Sigmoid colon (tissue), 7 donors: ENCODE measurements at regions of chr11 and their contacts with region 1.

Region 1: GRCh38 chr11:74739546-74740270 is 8.5 kb upstream of the CHRDL2 start:
- DNase-seq: no peak
- H3K4me3 ChIP-seq: no peak overlapping the region
- H3K27ac ChIP-seq: no peak overlapping the region
- H3K4me1 ChIP-seq: no peaks in the 10 kb centered on the region
- H3K27me3 ChIP-seq: no peaks in the 10 kb centered on the region
- CTCF ChIP-seq: peak; percentile 66 to 92 (median 83)
- EP300 ChIP-seq: no peak
- POLR2A ChIP-seq: no peak

Region 2: GRCh38 chr11:74255741-74256369 is 483.9 kb before region 1 on chr11:
- intact Hi-C with region 1: loop called (anchors 10 kb)
- DNase-seq: no peak
- H3K4me3 ChIP-seq: no peak overlapping the region
- H3K27ac ChIP-seq: no peak overlapping the region
- H3K4me1 ChIP-seq: peaks cover 0 to 19% (median 18%) of the 10 kb centered on the region in 4 donors
- H3K27me3 ChIP-seq: no peaks in the 10 kb centered on the region
- CTCF ChIP-seq: peak; percentile 62 to 90 (median 86)
- EP300 ChIP-seq: no peak
- POLR2A ChIP-seq: no peak

Region 3: DNA sequence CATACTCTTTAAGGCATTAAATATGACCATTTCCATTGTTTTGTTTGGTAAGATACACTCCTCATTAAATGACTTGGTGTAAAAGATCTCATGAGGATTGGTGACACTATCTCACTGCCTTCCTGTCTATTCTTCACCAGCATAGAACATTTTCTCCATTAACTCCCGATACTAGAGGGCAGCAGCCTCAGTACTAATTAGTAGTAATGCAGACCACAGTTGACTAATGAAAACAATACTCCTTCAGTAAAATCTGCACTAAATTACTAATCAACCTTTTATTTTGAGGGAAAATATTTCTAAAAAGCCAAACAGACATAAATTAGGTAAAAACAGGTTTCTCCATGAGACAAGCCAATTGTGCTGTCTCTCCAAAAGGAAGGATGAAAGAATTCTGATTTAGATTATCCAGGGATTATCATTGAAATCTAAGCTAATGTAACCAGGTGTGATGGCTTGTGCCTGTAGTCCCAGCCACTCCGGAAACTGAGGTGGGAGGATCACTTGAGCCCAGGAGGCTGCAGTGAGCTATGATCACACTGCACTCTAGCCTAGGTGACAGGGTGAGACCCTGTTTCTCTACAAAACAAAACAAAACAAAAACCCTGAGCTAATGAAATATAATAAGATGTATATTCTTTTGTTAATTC is 350.9 kb before region 1 on chr11:
- intact Hi-C with region 1: loop called (anchors 5 kb)
- DNase-seq: peak; percentile 72
- H3K4me3 ChIP-seq: no peak overlapping the region
- H3K27ac ChIP-seq: no peak overlapping the region
- H3K4me1 ChIP-seq: peaks cover 0 to 6% (median 0%) of the 10 kb centered on the region in 4 donors
- H3K27me3 ChIP-seq: no peaks in the 10 kb centered on the region
- CTCF ChIP-seq: peak; percentile 43 to 76 (median 66)
- EP300 ChIP-seq: no peak
- POLR2A ChIP-seq: no peak

Region 4: DNA sequence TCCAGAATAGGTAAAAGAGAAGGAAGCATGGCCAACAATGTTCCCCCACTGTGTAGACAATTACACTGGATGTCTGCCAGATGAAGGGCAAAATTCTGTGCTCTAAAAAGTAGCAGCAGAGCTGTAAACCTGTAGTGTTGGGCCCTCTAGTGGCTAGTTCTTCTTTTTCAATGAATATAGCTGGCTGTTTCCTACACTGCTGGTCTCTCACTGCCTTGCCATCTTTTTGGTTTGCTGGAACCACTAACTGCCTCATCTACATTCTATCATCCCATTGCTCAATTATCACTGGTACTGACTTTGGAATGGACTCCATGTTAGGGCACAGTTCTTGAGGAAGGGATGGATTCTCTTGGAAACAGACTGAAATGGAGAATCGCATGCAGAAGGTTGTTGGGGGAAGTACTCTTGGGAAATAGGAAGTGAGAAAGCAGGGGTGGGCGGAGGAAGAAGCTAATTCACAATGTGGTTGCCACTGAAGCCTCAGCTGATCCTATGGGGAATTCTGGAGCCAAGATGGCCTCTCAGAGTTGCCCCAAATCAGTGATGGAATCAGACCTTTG is 290.3 kb before region 1 on chr11:
- intact Hi-C with region 1: loop called (anchors 2 kb)
- DNase-seq: peak; percentile 68
- H3K4me3 ChIP-seq: no peak overlapping the region
- H3K27ac ChIP-seq: no peak overlapping the region
- H3K4me1 ChIP-seq: peaks cover 0 to 5% (median under 1%) of the 10 kb centered on the region in 4 donors
- H3K27me3 ChIP-seq: no peaks in the 10 kb centered on the region
- CTCF ChIP-seq: peak; percentile 32 to 77 (median 73)
- EP300 ChIP-seq: no peak
- POLR2A ChIP-seq: no peak

Region 5: DNA sequence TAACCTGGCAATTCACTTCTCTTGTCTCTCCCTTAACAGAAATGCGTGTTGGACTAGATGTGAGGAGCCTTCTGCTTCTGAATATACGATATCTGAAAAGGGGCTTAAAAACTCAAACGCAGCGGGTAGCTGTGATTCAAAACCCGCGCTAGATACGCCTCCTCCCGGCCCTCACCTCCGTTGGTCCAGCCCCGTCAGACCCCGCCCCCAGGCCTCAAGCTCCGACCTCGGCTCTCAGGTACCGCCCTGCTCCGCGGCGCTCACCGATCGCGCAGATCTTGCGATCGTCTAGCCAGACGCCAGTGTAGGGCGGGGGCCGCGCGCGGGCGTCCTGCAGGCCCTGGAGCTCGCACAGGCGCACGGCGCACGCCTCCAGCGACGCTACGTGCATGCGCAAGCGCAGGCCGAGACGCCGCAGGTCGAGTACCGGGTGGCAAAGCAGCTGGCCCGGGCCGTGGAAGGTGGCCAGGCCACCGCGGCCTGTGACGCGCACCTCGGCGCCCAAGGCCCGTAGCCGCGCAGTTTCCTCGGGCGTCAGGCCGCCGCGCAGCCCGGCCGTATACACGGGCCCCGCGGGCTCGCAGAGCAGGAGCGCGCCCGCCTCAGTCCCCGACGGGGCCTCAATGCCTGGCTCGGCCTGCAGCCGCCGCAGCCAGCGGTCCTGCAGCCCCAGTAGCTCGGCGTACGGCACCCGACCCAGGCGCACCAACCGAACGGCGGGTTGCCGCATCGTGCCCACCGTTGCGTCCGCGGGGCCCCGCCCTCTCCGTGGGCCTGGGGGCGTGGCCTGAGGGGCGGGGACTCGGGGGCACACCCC is 246.5 kb before region 1 on chr11 and contains the start of gene LIPT2:
- intact Hi-C with region 1: loop called (anchors 5 kb)
- DNase-seq: peak; percentile 98
- H3K4me3 ChIP-seq: peak within 1 kb of the TSS; percentile 77 to 90 (median 80)
- H3K27ac ChIP-seq: peak within 1 kb of the TSS; percentile 97 to 99 (median 98)
- H3K4me1 ChIP-seq: peaks cover 0 to 13% (median 11%) of the 10 kb centered on the region in 4 donors
- H3K27me3 ChIP-seq: no peaks in the 10 kb centered on the region
- CTCF ChIP-seq: no peak
- EP300 ChIP-seq: no peak
- POLR2A ChIP-seq: peak; percentile 35 to 50
- total RNA-seq, gene LIPT2: 3.2 to 3.9 (median 3.8) TPM

Region 6: GRCh38 chr11:74592441-74593362 is 147.0 kb before region 1 on chr11 and contains the start of gene POLD3:
- intact Hi-C with region 1: loop called (anchors 5 kb)
- DNase-seq: peak; percentile 95
- H3K4me3 ChIP-seq: peak within 1 kb of the TSS; percentile 84 to 93 (median 88)
- H3K27ac ChIP-seq: peak within 1 kb of the TSS; percentile 77 to 82 (median 80)
- H3K4me1 ChIP-seq: peaks cover 0 to 21% (median 15%) of the 10 kb centered on the region in 4 donors
- H3K27me3 ChIP-seq: no peaks in the 10 kb centered on the region
- CTCF ChIP-seq: no peak
- EP300 ChIP-seq: no peak
- POLR2A ChIP-seq: no peak
- total RNA-seq, gene POLD3: 11.2 to 23.0 (median 14.8) TPM

Region 7: GRCh38 chr11:74720596-74721478 is 18.9 kb before region 1 on chr11:
- intact Hi-C with region 1: no loop called
- DNase-seq: peak; percentile 97
- H3K4me3 ChIP-seq: no peak overlapping the region
- H3K27ac ChIP-seq: peak overlapping the region; percentile 79 to 93 (median 84)
- H3K4me1 ChIP-seq: peaks cover 0 to 86% (median 73%) of the 10 kb centered on the region in 4 donors
- H3K27me3 ChIP-seq: no peaks in the 10 kb centered on the region
- CTCF ChIP-seq: no peak
- EP300 ChIP-seq: peak in 2 of 4 donors; percentile 41 to 65
- POLR2A ChIP-seq: no peak

Region 8: DNA sequence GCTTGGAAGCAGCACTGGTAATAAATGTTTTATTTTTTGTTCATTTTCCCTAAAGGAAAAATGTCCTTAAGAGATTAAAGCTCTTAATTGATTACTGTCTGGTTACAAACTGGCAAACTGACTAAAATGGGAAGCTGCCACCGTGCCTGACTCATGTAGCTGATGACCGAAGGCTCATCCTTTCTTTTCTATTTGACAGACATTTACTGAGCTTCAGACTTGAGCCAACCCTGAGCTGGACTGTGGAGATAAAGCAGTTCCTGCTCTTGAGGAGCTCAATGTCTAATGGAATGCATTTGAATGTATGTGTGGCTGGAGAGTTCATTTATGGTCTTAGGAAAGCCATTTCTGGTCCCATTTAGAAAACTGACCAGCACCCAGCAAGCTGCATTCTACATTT is 100.3 kb after region 1 on chr11:
- intact Hi-C with region 1: no loop called
- DNase-seq: no peak
- H3K4me3 ChIP-seq: no peak overlapping the region
- H3K27ac ChIP-seq: no peak overlapping the region
- H3K4me1 ChIP-seq: peaks cover 0 to 15% (median 5%) of the 10 kb centered on the region in 4 donors
- H3K27me3 ChIP-seq: no peaks in the 10 kb centered on the region
- CTCF ChIP-seq: no peak
- EP300 ChIP-seq: no peak
- POLR2A ChIP-seq: no peak

Region 9: DNA sequence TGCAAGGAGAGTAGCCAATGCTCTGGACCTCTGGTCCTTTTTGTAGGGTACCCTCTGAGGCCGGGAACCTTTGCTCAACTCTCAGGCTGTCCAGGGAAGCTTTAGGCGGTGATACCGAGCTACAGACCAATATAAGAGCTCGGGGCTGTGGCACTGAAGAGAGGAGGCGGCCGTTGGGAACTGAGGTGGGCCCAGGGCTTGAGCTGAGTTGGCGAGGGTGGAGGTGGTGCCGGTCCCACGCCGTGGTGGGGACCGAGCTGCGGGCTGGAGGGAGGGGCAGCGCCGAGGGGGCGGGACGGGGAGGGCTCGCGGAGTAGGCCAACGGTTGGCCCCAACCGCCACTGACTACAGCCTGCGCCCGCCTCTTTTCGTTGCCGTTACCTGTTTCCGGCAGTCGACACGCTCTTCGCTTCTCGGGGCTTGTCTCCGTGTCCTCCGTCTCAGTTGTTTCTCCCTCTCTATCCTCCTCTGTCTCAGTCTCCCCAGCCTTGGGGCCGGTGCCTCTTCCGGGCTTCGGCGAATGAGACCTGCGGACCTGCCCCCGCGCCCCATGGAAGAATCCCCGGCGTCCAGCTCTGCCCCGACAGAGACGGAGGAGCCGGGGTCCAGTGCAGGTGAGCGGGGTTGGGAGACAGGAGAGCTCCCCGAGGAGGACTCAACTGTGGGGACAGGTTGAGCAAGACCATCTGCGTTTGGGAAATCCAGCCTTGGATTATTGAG is 249.0 kb after region 1 on chr11 and contains the start of gene NEU3:
- intact Hi-C with region 1: no loop called
- DNase-seq: peak; percentile 84
- H3K4me3 ChIP-seq: peak within 1 kb of the TSS; percentile 48 to 74 (median 64)
- H3K27ac ChIP-seq: peak within 1 kb of the TSS; percentile 67 to 71 (median 71)
- H3K4me1 ChIP-seq: peaks cover 0 to 12% (median 6%) of the 10 kb centered on the region in 4 donors
- H3K27me3 ChIP-seq: no peaks in the 10 kb centered on the region
- CTCF ChIP-seq: no peak
- EP300 ChIP-seq: no peak
- POLR2A ChIP-seq: no peak
- total RNA-seq, gene NEU3: 3.3 to 10.2 (median 4.8) TPM